HCT116 (cell line): ENCODE measurements at regions of chr12 and their contacts with region 1.

Region 1: DNA sequence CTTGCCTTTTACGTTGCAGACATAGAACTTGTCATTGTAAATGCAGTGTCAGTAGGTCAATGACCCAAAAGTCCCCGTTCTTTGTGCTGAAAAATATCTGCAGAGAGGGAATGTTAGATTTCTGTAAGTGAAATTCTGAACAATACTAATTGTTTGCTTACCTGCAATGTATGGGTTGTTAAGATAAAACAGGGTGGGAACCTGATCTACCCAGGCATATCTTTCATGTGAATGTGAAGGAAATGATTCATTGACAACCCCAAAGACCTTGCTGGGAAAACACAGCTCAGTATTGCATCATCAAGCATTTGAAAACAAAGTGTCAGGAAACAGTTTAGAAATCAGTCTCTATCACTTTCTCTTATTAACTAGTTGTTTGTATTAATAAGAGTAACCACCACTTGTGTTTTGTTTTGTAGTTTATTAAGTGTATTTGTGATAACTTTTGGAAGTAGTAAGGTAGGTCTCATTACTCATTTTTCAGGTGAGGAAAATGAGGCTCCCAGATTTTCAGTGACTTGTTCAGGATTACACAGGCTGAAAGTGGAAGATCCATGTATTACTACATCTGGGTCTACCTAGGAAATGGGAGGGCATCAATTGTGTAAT is 57.9 kb upstream of the SLC38A2 start:
- DNase-seq: peak; percentile 92
- ATAC-seq: peak; percentile 65
- H3K4me3 ChIP-seq: peak overlapping the region in 1 of 2 experiments; percentile 38; a peak in 2 of 4 replicates
- H3K27ac ChIP-seq: peak overlapping the region; percentile 76
- H3K4me1 ChIP-seq: peaks cover 67 to 71% of the 10 kb centered on the region in 2 experiments
- H3K27me3 ChIP-seq: no peaks in the 10 kb centered on the region
- CTCF ChIP-seq: no peak
- POLR2A ChIP-seq: no peak
- RAD21 ChIP-seq: peak; percentile 41

Region 2: DNA sequence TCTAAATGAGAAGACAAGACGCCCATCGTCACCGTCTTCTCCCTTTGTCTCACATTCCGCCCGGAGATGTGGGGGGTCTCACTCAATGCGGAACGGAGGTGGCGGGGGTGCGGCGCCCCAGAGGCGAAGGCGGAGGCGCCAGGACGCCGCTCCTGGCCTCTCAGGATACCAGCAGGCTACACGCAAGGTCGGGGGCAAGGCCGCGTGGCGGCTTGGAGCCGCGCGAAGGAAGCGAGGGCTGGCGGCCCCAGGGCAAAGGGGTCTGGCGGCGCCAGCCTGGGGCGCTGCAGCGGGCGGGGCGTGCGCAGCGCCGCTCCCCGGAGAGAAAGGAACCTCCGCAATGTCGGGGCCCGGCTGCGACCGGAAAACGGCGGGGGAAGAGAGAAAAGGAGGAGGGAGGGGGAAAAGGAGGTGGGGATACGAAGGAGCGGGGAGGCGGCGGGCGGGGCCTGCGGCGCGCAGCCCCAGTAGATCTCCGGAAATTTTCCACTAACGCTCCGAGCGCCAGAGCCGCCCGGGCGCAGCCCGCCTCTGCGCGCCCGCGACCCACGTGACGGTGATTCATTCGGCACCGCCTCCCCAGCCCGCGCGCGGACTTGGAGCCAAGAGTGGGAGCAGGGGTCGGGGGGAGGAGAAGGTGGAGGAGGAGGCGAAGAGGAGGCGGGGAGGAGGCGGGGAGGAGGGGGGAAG is 47.3 kb before region 1 on chr12:
- CTCF ChIA-PET with region 1: no interaction called
- POLR2A ChIA-PET with region 1: interaction called, 4 read pairs
- RAD21 ChIA-PET with region 1: no interaction called
- intact Hi-C with region 1: loop called (anchors 1 kb)
- DNase-seq: peak; percentile 94
- ATAC-seq: peak; percentile 85
- H3K4me3 ChIP-seq: peak overlapping the region; percentile 68 to 74
- H3K27ac ChIP-seq: peak overlapping the region; percentile 98
- H3K4me1 ChIP-seq: peaks cover 47 to 56% of the 10 kb centered on the region in 2 experiments
- H3K27me3 ChIP-seq: no peaks in the 10 kb centered on the region
- CTCF ChIP-seq: 0 out of 6 replicates have a peak, but pooled peaks of 1 of the 3 experiments have one; percentile 10
- POLR2A ChIP-seq: no peak
- RAD21 ChIP-seq: peak; percentile 31

Region 3: GRCh38 chr12:46473634-46474329 is 43.3 kb after region 1 on chr12:
- CTCF ChIA-PET with region 1: no interaction called
- POLR2A ChIA-PET with region 1: interaction called, 13 read pairs
- RAD21 ChIA-PET with region 1: interaction called in 1 of 2 experiments, 4 read pairs
- intact Hi-C with region 1: loop called (anchors 1 kb)
- DNase-seq: peak; percentile 87
- ATAC-seq: peak; percentile 66
- H3K4me3 ChIP-seq: peak overlapping the region; percentile 10 to 27; a peak in 3 of 4 replicates
- H3K27ac ChIP-seq: peak overlapping the region; percentile 100
- H3K4me1 ChIP-seq: peaks cover 87 to 93% of the 10 kb centered on the region in 2 experiments
- H3K27me3 ChIP-seq: no peaks in the 10 kb centered on the region
- CTCF ChIP-seq: no peak
- POLR2A ChIP-seq: no peak
- RAD21 ChIP-seq: peak; percentile 45

Region 4: DNA sequence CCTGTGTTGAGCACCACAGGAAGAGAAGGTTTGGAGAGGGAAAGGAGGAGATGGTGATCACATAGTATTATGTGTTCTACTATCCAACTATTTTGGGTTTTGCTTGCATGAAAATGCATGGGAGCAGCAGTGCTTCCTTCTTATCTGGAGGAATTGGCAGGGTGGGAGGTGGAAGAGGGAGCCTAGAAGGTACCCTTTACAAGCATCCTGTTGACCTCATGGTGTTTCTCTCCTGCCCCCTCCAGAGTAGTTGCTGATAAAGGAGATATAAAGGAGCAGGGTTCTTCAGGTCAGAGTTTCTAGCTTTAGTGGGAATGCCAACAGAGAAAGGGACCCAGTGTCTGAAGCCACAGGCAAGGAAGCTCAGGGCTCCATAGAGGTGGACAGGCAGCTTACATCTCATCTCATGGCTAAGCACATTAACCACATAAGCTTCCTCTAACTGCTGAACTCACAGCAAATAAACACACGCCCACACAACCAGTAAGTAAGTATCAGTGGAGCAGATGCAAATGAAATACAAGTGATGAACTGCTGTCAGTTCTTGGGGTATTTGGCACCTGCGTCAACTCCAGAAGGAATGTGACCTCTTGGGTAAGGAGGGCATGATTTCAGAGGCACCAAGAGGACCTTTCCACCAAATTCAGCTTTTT is 116.3 kb after region 1 on chr12:
- CTCF ChIA-PET with region 1: no interaction called
- POLR2A ChIA-PET with region 1: interaction called, 7 read pairs
- RAD21 ChIA-PET with region 1: no interaction called
- intact Hi-C with region 1: loop called (anchors 2 kb)
- DNase-seq: no peak
- ATAC-seq: no peak
- H3K4me3 ChIP-seq: no peak overlapping the region
- H3K27ac ChIP-seq: peak overlapping the region; percentile 91
- H3K4me1 ChIP-seq: peaks cover 55 to 58% of the 10 kb centered on the region in 2 experiments
- H3K27me3 ChIP-seq: no peaks in the 10 kb centered on the region
- CTCF ChIP-seq: no peak
- POLR2A ChIP-seq: no peak
- RAD21 ChIP-seq: no peak

Region 5: GRCh38 chr12:46661110-46661845 is 230.8 kb after region 1 on chr12:
- CTCF ChIA-PET with region 1: no interaction called
- POLR2A ChIA-PET with region 1: no interaction called
- RAD21 ChIA-PET with region 1: interaction called in 1 of 2 experiments, 4 read pairs
- intact Hi-C with region 1: loop called (anchors 2 kb)
- DNase-seq: peak; percentile 71
- ATAC-seq: peak; percentile 78
- H3K4me3 ChIP-seq: no peak overlapping the region
- H3K27ac ChIP-seq: peak overlapping the region; percentile 21; the same call in 1 of the 2 replicates
- H3K4me1 ChIP-seq: peaks cover 53 to 65% of the 10 kb centered on the region in 2 experiments
- H3K27me3 ChIP-seq: no peaks in the 10 kb centered on the region
- CTCF ChIP-seq: peak; percentile 69 to 87 (median 73); a peak in 5 of 6 replicates
- POLR2A ChIP-seq: no peak
- RAD21 ChIP-seq: peak; percentile 93

Region 6: GRCh38 chr12:46908236-46908935 is 477.9 kb after region 1 on chr12:
- CTCF ChIA-PET with region 1: no interaction called
- POLR2A ChIA-PET with region 1: no interaction called
- RAD21 ChIA-PET with region 1: no interaction called
- intact Hi-C with region 1: no loop called
- DNase-seq: no peak
- ATAC-seq: peak; percentile 75
- H3K4me3 ChIP-seq: no peak overlapping the region
- H3K27ac ChIP-seq: no peak overlapping the region
- H3K4me1 ChIP-seq: peaks cover 0 to 11% of the 10 kb centered on the region in 2 experiments; a peak in 1 of 4 replicates
- H3K27me3 ChIP-seq: no peaks in the 10 kb centered on the region
- CTCF ChIP-seq: no peak
- POLR2A ChIP-seq: no peak
- RAD21 ChIP-seq: no peak